ENCODE measurements at regions of chr6 and their contacts with region 1.

Region 1: GRCh38 chr6:129498950-129499842 is 210.8 kb downstream of the ARHGAP18 start:
- DNase-seq: no peak
- H3K4me3 ChIP-seq: no peak overlapping the region
- H3K27ac ChIP-seq: no peak overlapping the region
- H3K4me1 ChIP-seq: peaks cover 4 to 17% (median 11%) of the 10 kb centered on the region in 4 experiments; a peak in 5 of 7 replicates
- H3K27me3 ChIP-seq: no peaks in the 10 kb centered on the region
- CTCF ChIP-seq: peak in 2 of 3 experiments; percentile 35 to 60; a peak in 2 of 4 replicates
- EP300 ChIP-seq: no peak
- POLR2A ChIP-seq: no peak
- RAD21 ChIP-seq: peak; percentile 75 to 79

Region 2: GRCh38 chr6:129510950-129511349 is 11.8 kb after region 1 on chr6:
- CTCF ChIA-PET with region 1: interaction called, 83 read pairs
- POLR2A ChIA-PET with region 1: no interaction called
- DNase-seq: no peak
- H3K4me3 ChIP-seq: no peak overlapping the region
- H3K27ac ChIP-seq: no peak overlapping the region
- H3K4me1 ChIP-seq: no peaks in the 10 kb centered on the region
- H3K27me3 ChIP-seq: no peaks in the 10 kb centered on the region
- CTCF ChIP-seq: no peak
- EP300 ChIP-seq: no peak
- POLR2A ChIP-seq: no peak
- RAD21 ChIP-seq: no peak

Region 3: GRCh38 chr6:129546702-129547101 is 47.5 kb after region 1 on chr6:
- CTCF ChIA-PET with region 1: interaction called, 10 read pairs
- POLR2A ChIA-PET with region 1: no interaction called
- DNase-seq: no peak
- H3K4me3 ChIP-seq: no peak overlapping the region
- H3K27ac ChIP-seq: no peak overlapping the region
- H3K4me1 ChIP-seq: no peaks in the 10 kb centered on the region
- H3K27me3 ChIP-seq: no peaks in the 10 kb centered on the region
- CTCF ChIP-seq: no peak
- EP300 ChIP-seq: no peak
- POLR2A ChIP-seq: no peak
- RAD21 ChIP-seq: no peak

Region 4: DNA sequence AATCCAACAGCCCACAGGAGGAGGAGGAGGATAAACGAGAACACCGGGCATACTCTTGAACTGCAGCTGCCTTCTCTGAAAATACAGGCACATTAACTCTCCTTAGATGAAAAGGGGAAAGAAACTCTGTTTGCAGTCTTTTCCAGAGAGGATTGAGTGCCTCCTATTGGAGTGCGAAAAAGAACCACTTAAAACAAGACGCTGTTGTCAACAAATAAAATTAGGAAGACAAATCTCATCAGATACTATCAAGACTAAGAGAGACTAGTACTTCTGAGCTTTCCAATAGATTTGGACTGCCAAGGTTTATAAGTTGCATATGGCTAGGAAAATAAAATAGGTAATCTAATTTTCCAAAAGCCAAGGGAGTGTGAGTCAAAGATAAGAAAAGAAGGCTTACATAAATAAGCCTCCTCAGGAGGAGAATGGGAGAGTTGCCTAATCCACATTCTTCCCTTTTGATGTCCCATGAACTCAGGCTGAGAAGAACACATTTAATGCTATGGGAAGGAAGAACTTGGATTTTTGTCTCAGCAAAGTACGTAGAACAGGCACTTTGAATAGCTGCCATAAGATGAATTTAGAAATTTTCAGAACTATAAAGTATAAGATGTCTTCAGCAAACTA is 56.1 kb after region 1 on chr6:
- CTCF ChIA-PET with region 1: interaction called, 157 read pairs
- POLR2A ChIA-PET with region 1: no interaction called
- DNase-seq: no peak
- H3K4me3 ChIP-seq: no peak overlapping the region
- H3K27ac ChIP-seq: no peak overlapping the region
- H3K4me1 ChIP-seq: no peaks in the 10 kb centered on the region
- H3K27me3 ChIP-seq: no peaks in the 10 kb centered on the region
- CTCF ChIP-seq: no peak
- EP300 ChIP-seq: no peak
- POLR2A ChIP-seq: no peak
- RAD21 ChIP-seq: peak; percentile 35 to 36; a peak in 3 of 4 replicates

Region 5: DNA sequence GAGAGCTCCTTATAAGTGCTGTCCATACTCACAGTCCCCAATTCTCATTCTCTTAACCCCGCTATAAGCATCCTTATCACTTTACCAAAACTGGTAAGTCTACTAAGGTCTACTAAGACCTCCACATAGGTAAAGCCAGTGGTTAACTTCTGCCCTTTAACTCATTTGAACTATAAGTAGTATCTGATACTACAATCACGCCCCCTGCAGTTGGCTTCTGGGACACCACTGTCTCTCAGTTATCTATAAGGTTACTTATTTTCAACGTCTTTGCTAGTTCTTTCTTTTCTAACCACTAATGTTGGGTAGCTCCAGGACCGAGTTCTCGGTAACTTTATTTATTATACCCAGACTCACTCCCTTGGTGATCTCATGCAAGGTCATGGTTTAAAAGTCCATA is 68.2 kb after region 1 on chr6:
- CTCF ChIA-PET with region 1: interaction called, 180 read pairs
- POLR2A ChIA-PET with region 1: no interaction called
- DNase-seq: peak; percentile 29 to 81
- H3K4me3 ChIP-seq: no peak overlapping the region
- H3K27ac ChIP-seq: no peak overlapping the region
- H3K4me1 ChIP-seq: no peaks in the 10 kb centered on the region; a peak in 1 of 7 replicates
- H3K27me3 ChIP-seq: no peaks in the 10 kb centered on the region
- CTCF ChIP-seq: peak in 2 of 3 experiments; percentile 47 to 66; a peak in 2 of 4 replicates
- EP300 ChIP-seq: no peak
- POLR2A ChIP-seq: no peak
- RAD21 ChIP-seq: peak; percentile 54 to 59

Region 6: GRCh38 chr6:129575378-129576118 is 76.4 kb after region 1 on chr6:
- CTCF ChIA-PET with region 1: interaction called, 180 read pairs
- POLR2A ChIA-PET with region 1: no interaction called
- DNase-seq: no peak
- H3K4me3 ChIP-seq: no peak overlapping the region
- H3K27ac ChIP-seq: no peak overlapping the region
- H3K4me1 ChIP-seq: no peaks in the 10 kb centered on the region
- H3K27me3 ChIP-seq: no peaks in the 10 kb centered on the region
- CTCF ChIP-seq: peak in 2 of 3 experiments; percentile 58 to 67; a peak in 3 of 4 replicates
- EP300 ChIP-seq: no peak
- POLR2A ChIP-seq: no peak
- RAD21 ChIP-seq: peak; percentile 83 to 90

Region 7: DNA sequence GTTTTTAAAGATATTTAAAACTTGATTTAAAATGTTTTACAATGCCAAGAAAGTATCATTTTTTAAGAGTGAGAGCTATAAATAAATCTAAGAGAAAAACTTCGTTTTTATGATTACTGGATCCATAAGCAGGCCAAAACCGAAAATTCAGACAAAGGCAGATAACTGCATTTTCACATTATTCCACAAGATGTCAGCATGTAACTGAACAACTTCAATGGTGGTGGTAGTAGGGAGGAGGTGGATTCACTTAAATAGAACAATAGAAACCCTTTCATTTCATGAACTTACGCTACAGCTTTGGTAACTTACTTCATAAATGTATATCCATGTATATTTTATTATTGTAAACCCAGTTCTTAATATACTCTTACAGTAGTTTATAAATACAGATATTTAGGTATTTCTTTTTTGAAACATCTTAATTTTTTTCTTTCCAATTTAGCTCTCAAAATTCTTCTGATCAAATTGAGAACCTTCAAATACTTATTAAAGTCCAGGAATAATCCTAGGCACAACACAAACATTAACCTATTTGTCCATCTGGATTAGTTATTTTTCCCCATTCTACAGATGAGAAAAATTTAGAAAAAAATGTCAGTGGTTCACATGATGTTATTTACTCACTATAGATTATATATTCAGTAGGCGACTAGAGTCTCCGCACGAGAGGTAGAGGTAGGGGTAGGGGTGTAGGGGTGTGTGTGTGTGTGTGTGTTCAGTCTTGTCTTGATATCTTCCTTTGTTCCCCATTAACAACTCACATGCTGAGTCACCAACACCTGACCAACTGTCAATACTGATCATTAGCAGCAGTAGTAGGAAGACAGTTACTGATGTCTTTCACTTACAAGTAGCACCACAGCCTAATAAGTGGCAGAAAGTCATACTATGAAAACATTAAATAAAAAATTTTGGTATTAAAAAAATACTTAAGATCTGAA is 99.3 kb after region 1 on chr6:
- CTCF ChIA-PET with region 1: interaction called, 43 read pairs
- POLR2A ChIA-PET with region 1: no interaction called
- DNase-seq: no peak
- H3K4me3 ChIP-seq: no peak overlapping the region
- H3K27ac ChIP-seq: no peak overlapping the region
- H3K4me1 ChIP-seq: peaks cover 0 to 3% (median 0%) of the 10 kb centered on the region in 4 experiments; a peak in 1 of 7 replicates
- H3K27me3 ChIP-seq: no peaks in the 10 kb centered on the region
- CTCF ChIP-seq: peak in 2 of 3 experiments; percentile 68 to 72; a peak in 3 of 4 replicates
- EP300 ChIP-seq: no peak
- POLR2A ChIP-seq: no peak
- RAD21 ChIP-seq: peak; percentile 95 to 96